Activated CD4-positive, alpha-beta memory T cell treated with anti-CD3 and anti-CD28 coated beads for 36 hours (primary cell): ENCODE measurements at regions of chr9 and their contacts with region 1.

Region 1: DNA sequence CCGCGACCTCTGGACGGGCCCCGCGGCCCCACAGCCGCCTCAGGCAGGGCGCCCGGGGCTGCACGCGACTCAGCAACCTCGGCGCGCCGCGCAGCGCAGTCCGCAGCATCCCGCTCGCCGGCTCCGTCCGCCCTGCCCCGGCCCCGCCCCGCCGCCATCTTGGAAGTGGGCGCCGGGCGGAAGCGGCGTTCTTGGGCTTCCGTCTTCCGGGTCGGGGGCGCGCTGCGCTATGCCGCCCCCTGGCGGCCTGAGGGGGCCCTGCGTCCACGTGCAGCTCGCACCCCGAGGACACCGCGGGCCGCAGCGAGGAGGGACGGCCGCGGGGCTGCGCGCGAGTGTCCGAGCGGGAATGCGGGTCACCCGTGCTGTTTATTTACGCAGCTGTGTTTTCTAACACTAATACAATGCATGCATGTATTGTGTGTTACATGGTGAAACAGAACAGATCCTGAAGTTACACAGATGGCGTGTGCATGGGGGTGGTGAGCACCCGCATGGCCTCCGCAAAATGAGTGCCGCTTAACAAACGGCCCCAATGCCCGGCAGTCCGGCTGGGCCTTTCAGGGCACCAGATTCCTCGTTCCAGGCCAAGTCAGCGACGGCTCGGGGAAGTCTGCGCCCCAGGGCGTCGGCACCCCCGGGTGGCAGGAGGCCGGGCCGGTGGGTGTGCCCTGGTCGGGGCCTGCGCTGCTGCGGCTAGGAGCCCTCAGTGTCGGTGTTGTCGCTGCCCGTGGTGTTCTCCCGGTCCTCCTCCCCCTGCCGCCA is at the start of gene DNLZ:
- DNase-seq: peak; percentile 90
- H3K4me3 Mint-ChIP-seq: peak within 1 kb of the TSS; percentile 83
- H3K27ac Mint-ChIP-seq: peak within 1 kb of the TSS; percentile 88
- H3K4me1 Mint-ChIP-seq: peaks cover 9% of the 10 kb centered on the region
- H3K27me3 Mint-ChIP-seq: no peaks in the 10 kb centered on the region
- total RNA-seq, gene DNLZ: 14.5 to 15.2 TPM

Region 2: GRCh38 chr9:136312436-136312835 is 51.4 kb before region 1 on chr9:
- CTCF ChIA-PET with region 1: interaction called, 10 read pairs
- POLR2A ChIA-PET with region 1: no interaction called
- intact Hi-C with region 1: no loop called
- DNase-seq: peak; percentile 60
- H3K4me3 Mint-ChIP-seq: no peak overlapping the region
- H3K27ac Mint-ChIP-seq: no peak overlapping the region
- H3K4me1 Mint-ChIP-seq: no peaks in the 10 kb centered on the region
- H3K27me3 Mint-ChIP-seq: no peaks in the 10 kb centered on the region

Region 3: DNA sequence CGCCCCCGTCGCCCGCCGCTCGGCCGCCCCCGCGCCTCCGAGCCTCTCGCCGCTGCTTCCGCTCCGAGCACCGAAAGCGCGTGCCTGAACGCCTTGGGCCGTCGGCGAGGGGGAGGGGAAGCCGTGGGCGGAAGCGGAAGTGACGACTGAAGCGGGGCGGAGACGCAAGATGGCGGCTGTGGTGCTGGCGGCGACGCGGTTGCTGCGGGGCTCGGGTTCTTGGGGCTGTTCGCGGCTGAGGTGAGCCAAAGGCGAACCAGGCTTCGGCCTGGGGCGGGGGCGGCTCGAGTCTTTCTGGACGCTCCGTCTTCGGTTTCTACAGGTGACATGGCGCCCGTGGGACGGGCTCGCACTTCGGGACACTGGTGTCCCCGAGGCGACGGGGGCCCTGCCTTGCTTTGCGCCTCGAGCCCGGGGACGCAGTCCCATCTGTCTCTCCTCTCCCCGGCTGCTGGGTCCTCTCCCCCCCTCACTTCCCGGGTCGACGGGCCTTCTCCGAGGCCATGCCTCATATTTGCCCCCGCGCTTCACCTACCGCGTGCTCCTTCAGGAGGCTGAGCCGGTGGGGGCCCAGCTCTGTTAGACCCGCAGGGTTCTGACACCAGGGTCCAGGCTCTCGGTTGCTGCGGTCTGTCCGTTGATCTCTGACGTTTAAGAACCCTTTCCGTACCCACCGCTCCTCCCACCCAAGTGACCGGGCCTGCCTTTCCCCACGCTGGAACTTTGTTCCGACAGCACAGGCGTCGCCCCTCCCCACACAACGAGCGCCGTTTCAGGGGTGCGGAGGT is 46.9 kb after region 1 on chr9 and contains the starts of genes ENTR1 and PMPCA:
- CTCF ChIA-PET with region 1: interaction called, 4 read pairs
- POLR2A ChIA-PET with region 1: interaction called, 3 read pairs
- intact Hi-C with region 1: loop called (anchors 2 kb)
- DNase-seq: peak; percentile 97
- H3K4me3 Mint-ChIP-seq: peak within 1 kb of the TSS; percentile 91
- H3K27ac Mint-ChIP-seq: peak within 1 kb of the TSS; percentile 94
- H3K4me1 Mint-ChIP-seq: peaks cover 55% of the 10 kb centered on the region
- H3K27me3 Mint-ChIP-seq: no peaks in the 10 kb centered on the region
- total RNA-seq, gene ENTR1: 66.9 to 74.9 TPM
- total RNA-seq, gene PMPCA: 108 to 112 TPM

Region 4: GRCh38 chr9:136424750-136425362 is 61.1 kb after region 1 on chr9:
- CTCF ChIA-PET with region 1: no interaction called
- POLR2A ChIA-PET with region 1: no interaction called
- intact Hi-C with region 1: no loop called
- DNase-seq: no peak
- H3K4me3 Mint-ChIP-seq: no peak overlapping the region
- H3K27ac Mint-ChIP-seq: peak overlapping the region; percentile 56
- H3K4me1 Mint-ChIP-seq: peaks cover 5% of the 10 kb centered on the region
- H3K27me3 Mint-ChIP-seq: no peaks in the 10 kb centered on the region

Region 5: GRCh38 chr9:136439550-136440408 is 76.0 kb after region 1 on chr9 and contains the start of gene INPP5E:
- CTCF ChIA-PET with region 1: interaction called, 12 read pairs
- POLR2A ChIA-PET with region 1: no interaction called
- intact Hi-C with region 1: loop called (anchors 2 kb)
- DNase-seq: peak; percentile 84
- H3K4me3 Mint-ChIP-seq: peak within 1 kb of the TSS; percentile 88
- H3K27ac Mint-ChIP-seq: peak within 1 kb of the TSS; percentile 23
- H3K4me1 Mint-ChIP-seq: peaks cover 23% of the 10 kb centered on the region
- H3K27me3 Mint-ChIP-seq: no peaks in the 10 kb centered on the region
- total RNA-seq, gene INPP5E: 18.8 to 21.3 TPM